ENCODE measurements at regions of chr10 and their contacts with region 1.

Region 1: DNA sequence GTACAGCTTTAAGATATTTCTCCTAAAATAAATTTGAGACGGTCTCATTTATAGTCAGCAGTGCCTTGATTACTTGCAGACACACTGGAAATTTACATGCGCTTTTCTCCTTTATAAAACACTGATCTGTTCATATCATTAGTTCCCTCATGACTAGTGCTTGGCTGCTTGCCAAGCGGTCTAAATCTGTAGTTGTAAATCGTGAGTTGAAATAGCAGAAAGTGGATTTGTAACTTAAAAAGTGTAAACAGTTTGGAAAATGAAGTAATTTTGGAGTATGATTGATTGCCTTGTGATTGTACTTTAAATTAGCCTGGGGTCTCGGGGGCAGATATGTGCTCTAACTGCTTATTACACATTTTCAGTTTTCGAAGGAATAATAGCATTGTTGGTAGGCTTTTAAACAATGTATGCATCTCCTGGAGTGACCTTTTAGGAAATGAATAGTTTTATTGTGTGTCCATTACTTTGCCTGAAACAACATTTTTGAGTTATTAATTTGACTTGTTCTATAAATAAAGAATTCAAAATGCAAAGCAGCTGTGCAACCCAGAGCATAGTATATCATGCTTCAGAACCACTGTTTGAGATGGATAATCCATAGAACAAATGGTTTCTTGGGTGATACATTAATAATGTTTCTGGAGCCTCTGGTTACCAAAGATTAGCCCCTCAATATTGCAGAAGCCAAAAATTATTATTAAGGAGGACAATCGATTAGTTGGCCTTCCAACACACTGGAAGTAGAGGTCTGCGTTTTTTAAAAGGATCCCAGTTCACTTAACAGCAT is 73.3 kb downstream of the ARID5B start:
- DNase-seq: peak; percentile 26
- H3K27ac ChIP-seq: no peak overlapping the region
- CTCF ChIP-seq: no peak

Region 2: DNA sequence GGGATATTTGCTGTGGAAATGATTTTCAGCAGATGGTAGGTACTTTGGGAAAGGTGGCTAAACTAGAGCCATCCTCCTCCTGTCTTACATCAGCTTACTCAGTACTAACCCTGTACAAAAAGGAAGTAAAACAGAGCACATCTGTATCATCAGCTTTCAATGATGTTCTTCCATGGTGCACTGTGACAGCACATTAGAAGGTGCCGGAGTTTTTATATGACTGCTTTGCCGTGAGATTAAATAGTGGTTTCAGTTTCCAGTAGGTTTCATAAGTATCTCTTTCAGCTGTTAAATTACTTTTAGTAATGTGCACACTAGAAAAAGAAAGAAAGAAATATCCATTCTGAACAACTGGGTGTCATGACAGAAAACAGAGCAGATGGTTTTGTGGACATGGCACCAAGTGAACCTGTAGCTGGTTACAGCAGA is 13.2 kb after region 1 on chr10:
- CTCF ChIA-PET with region 1: no interaction called
- POLR2A ChIA-PET with region 1: no interaction called
- DNase-seq: no peak
- H3K27ac ChIP-seq: no peak overlapping the region
- CTCF ChIP-seq: no peak

Region 3: DNA sequence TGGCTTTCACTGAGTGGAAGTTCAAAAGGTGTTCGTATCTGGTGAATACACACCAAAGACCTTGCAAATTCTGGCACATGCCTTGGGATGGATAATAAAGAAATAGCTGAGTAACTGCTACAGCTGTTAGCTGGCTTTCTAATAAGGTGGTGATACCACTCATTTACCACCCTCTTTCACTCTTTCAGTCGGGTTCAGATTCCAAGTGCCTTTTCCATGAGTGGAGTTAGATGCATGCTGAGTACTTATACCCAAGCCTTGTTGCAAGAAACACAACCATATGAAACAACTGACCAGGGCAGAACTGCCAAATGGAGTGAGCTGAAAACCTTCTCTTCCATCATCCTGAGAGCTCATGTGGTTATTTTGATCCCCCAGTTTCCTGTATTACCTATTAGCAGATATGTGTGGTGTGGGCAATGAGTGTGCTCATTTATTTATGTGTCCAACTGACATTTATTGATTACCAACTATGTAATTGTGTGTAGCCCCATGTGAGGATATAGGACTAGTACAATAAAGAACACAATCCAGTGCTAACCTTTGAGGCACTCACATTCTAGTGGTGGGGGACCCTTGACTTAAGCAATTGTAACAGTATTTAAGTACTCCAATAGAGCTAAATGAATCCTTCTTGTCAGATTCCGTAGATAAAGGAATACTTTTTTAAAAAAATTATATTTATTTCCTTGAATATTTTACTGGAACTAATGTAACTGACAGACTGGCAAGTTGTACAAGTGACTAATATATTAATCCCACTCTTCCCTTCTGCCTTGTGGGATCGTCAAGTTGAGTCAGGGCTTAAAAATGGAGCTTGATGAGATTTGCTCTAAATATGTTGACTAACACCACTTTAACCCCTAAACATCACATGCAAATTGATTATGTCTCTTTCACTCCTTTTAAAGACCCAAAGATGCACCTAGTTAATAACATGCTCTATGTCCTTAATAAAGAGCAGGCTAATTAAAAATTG is 51.4 kb after region 1 on chr10:
- CTCF ChIA-PET with region 1: interaction called, 4 read pairs
- POLR2A ChIA-PET with region 1: interaction called, 11 read pairs
- DNase-seq: peak; percentile 74
- H3K27ac ChIP-seq: no peak overlapping the region
- CTCF ChIP-seq: no peak

Measured in RWPE1 (cell line).